Activated CD4-positive, alpha-beta memory T cell treated with anti-CD3 and anti-CD28 coated beads for 36 hours (primary cell): ENCODE measurements at regions of chr7 and their contacts with region 1.

Region 1: DNA sequence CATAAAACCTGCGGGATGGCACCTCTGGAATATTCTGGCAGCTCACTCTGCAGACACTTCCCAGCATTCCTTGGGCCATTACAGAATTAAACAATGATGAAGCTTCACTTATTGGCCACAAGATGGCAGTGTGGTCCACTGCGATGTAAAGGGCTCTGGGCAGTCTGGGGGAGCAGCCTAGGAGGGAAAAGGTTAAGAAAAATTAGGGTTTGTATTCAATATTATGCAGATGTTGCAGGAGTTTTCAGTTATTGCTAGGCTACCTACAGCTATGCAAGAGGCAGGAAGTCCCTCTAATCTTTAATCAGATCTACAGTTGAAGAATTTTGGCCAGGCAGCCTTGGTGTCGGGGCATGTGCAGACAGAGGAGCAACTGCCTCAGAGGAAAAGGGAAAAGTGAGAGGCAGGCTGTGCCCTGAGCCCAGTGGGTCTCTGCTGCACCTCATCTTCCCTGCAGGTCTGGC is 233.2 kb upstream of the PRSS1 start:
- DNase-seq: peak; percentile 53
- H3K4me3 Mint-ChIP-seq: no peak overlapping the region
- H3K27ac Mint-ChIP-seq: no peak overlapping the region
- H3K4me1 Mint-ChIP-seq: peaks cover 41% of the 10 kb centered on the region
- H3K27me3 Mint-ChIP-seq: no peaks in the 10 kb centered on the region

Region 2: GRCh38 chr7:142485617-142486226 is 30.3 kb before region 1 on chr7:
- CTCF ChIA-PET with region 1: interaction called, 17 read pairs
- POLR2A ChIA-PET with region 1: no interaction called
- intact Hi-C with region 1: loop called (anchors 1 kb)
- DNase-seq: peak; percentile 46
- H3K4me3 Mint-ChIP-seq: no peak overlapping the region
- H3K27ac Mint-ChIP-seq: no peak overlapping the region
- H3K4me1 Mint-ChIP-seq: peaks cover 25% of the 10 kb centered on the region
- H3K27me3 Mint-ChIP-seq: no peaks in the 10 kb centered on the region

Region 3: DNA sequence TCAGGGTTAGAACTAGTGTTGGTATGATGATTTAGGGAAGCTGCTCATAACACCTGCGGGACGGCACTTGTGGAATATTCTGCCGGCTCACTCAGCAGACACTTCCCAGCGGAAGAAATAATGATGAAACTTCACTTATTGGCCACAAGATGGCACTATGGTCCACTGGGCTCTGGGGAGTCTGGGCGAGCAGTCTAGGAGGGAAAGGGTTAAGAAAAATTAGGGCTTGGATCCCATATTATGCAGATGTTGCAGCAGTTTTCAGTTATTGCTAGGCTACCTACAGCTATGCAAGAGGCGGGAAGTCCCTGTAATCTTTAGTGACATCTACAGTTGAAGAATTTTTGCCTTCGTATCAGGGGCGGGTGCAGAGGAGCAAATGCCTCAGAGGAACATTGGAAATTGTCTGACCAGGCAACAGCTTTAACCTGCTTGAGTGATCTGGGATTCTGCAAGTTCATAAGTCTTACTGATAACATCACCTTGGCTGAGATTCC is 19.5 kb before region 1 on chr7:
- CTCF ChIA-PET with region 1: interaction called, 31 read pairs
- POLR2A ChIA-PET with region 1: no interaction called
- intact Hi-C with region 1: no loop called
- DNase-seq: peak; percentile 39
- H3K4me3 Mint-ChIP-seq: peak overlapping the region; percentile 47
- H3K27ac Mint-ChIP-seq: peak overlapping the region; percentile 7
- H3K4me1 Mint-ChIP-seq: peaks cover 34% of the 10 kb centered on the region
- H3K27me3 Mint-ChIP-seq: no peaks in the 10 kb centered on the region

Region 4: DNA sequence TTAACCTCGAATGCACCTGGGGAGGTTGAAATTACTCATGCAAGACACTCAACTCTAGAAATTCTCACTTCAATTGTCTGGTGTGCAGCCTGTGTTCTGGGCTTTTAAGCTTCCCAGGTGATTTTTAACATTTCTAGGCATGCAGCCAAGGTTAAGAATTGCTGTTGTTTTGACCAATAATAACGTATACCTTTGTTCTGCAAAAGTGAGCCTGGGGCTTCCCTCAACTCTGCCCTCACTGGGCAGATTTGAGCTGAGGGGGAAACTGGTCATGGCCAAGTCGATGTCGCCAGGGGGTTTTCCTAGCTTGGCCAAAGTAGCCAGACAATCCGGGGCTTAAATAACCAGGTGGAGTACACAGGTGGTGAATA is 255.3 kb after region 1 on chr7:
- CTCF ChIA-PET with region 1: no interaction called
- POLR2A ChIA-PET with region 1: no interaction called
- intact Hi-C with region 1: no loop called
- DNase-seq: no peak
- H3K4me3 Mint-ChIP-seq: no peak overlapping the region
- H3K27ac Mint-ChIP-seq: no peak overlapping the region
- H3K4me1 Mint-ChIP-seq: peaks cover 7% of the 10 kb centered on the region
- H3K27me3 Mint-ChIP-seq: no peaks in the 10 kb centered on the region